ENCODE measurements at regions of chrX and their contacts with region 1.

Region 1: GRCh38 chrX:65587616-65588526 is 53.3 kb upstream of the LAS1L start:
- DNase-seq: peak; percentile 56
- H3K4me3 ChIP-seq: peak overlapping the region; percentile 21
- H3K27ac ChIP-seq: no peak overlapping the region
- H3K4me1 ChIP-seq: no peaks in the 10 kb centered on the region
- H3K27me3 ChIP-seq: no peaks in the 10 kb centered on the region
- CTCF ChIP-seq: no peak

Region 2: DNA sequence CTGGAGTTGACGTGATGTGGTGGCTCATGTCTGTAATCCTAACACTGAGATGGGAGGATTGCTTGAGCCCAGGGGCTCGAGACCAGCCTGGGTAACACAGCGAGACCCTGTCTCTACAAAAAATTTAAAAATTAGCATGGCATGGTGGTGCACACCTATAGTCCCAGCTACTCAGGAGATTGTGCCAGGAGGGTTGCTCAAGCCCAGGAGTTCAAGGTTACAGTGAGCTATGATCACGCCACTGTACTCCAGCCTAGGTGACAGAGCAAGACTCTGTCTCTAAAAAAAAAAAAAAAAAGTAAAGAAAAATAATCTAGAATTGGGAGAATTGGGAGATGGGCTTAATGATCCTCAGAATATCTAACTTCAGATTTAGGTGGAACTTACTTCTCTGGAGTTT is 130.7 kb after region 1 on chrX:
- CTCF ChIA-PET with region 1: no interaction called
- POLR2A ChIA-PET with region 1: interaction called, 11 read pairs
- intact Hi-C with region 1: no loop called
- DNase-seq: no peak
- H3K4me3 ChIP-seq: no peak overlapping the region
- H3K27ac ChIP-seq: no peak overlapping the region
- H3K4me1 ChIP-seq: no peaks in the 10 kb centered on the region
- H3K27me3 ChIP-seq: no peaks in the 10 kb centered on the region
- CTCF ChIP-seq: no peak